ENCODE measurements at regions of chr9 and their contacts with region 1.

Region 1: GRCh38 chr9:28045051-28045450 is 471.8 kb upstream of the C9orf72 start:
- DNase-seq: no peak
- ATAC-seq: no peak
- H3K4me3 ChIP-seq: no peak overlapping the region
- H3K27ac ChIP-seq: no peak overlapping the region
- H3K4me1 ChIP-seq: no peaks in the 10 kb centered on the region
- H3K27me3 ChIP-seq: no peaks in the 10 kb centered on the region
- CTCF ChIP-seq: no peak
- POLR2A ChIP-seq: no peak

Region 2: GRCh38 chr9:28105001-28105400 is 60.0 kb after region 1 on chr9:
- intact Hi-C with region 1: loop called in 1 of 10 experiments (anchors 10 kb)
- DNase-seq: no peak
- ATAC-seq: no peak
- H3K4me3 ChIP-seq: no peak overlapping the region
- H3K27ac ChIP-seq: no peak overlapping the region
- H3K4me1 ChIP-seq: no peaks in the 10 kb centered on the region
- H3K27me3 ChIP-seq: no peaks in the 10 kb centered on the region
- CTCF ChIP-seq: no peak
- POLR2A ChIP-seq: no peak

Region 3: DNA sequence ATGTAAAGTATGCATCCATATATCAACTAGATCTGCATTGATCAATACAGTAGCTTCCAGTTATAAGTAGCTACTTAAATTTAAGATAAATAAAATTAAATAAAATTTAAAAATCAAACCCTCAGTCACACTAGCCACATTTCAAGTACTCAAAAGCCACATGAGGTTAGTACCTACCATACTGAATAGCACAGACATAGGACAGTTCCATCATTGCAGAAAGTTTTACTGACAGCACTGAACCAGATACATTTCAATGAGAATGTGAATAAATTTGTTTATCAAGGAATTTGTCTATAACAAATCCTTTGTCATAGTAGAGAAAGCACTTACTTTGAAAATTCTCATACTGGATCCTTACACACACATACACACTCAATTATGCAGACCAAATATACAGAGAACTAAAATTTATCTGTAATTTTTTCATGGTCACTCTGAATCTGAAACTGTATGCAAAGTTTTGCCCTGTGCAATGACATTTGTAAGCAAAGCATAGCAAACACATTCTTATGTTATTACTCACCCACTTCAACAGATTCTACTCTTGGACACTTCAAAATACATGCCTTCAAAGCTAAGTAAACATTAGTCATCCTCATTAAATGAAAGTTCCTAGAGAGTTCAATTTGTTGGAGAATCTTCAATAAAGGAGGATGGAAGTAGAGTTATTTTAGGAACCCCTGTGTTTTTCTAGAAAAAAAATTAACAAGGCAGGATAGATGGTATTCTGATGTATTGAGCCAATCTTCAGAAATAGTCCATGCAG is 167.7 kb after region 1 on chr9:
- intact Hi-C with region 1: no loop called
- DNase-seq: no peak
- ATAC-seq: peak in 3 of 4 donors; percentile 49 to 69 (median 52)
- H3K4me3 ChIP-seq: no peak overlapping the region
- H3K27ac ChIP-seq: no peak overlapping the region
- H3K4me1 ChIP-seq: peaks cover 0 to 4% (median 0%) of the 10 kb centered on the region in 12 donors
- H3K27me3 ChIP-seq: no peaks in the 10 kb centered on the region
- CTCF ChIP-seq: no peak
- POLR2A ChIP-seq: no peak

Measured in heart left ventricle (tissue), 16 donors.